ENCODE measurements at regions of chr17 and their contacts with region 1.

Region 1: DNA sequence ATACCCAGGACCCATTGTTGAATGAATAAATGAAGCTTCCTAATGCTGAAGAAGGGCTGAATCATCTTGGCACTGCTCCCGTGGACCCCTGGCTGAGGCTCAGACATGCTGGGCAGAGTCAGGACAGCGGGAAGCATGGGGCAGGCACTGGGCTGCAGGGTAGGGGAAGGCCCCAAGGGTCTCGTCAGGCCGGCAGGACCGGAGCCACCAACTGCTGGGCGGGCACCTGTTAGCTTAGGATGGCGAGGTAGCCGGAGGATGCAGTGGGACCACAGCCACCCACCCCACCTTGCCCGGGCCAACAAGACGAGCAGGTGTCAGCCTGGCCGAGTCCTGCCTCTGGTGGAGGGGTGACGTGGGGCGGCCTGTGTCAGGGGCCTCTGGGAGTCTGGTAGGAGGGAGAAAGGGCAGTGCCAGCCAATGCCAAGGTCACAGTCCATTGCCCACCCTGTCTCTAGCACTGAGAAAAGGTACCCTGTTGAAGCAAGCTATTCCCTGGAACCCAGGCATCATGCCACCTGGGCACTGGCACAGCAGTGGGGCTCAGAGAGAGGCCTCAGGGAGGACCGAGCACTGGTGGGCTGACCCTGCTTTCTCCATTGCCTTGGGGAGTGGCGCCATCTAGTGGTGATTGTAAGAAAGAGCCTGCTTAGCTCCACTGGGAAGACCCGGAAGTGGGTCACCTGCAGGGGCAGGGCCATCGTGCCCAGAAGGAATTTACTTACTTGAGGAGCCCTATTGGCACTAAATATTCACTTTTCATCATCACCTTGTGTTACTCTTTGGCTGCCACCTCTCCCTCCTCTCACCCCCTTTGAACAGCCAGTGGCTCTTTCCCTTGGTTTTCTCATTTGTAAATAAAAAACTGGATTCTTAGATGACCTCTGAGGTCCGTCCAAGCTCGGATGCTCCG is 3.0 kb upstream of the DLX3 start:
- DNase-seq: peak; percentile 68 to 94 (median 78)
- ATAC-seq: peak; percentile 83
- H3K4me3 ChIP-seq: no peak overlapping the region
- H3K4me3 Mint-ChIP-seq: no peak overlapping the region
- H3K27ac ChIP-seq: no peak overlapping the region
- H3K27ac Mint-ChIP-seq: no peak overlapping the region
- H3K4me1 ChIP-seq: peaks cover 44% of the 10 kb centered on the region
- H3K4me1 Mint-ChIP-seq: peaks cover 39% of the 10 kb centered on the region
- H3K27me3 ChIP-seq: peaks cover 71 to 82% of the 10 kb centered on the region in 2 experiments
- H3K27me3 Mint-ChIP-seq: peaks cover 84% of the 10 kb centered on the region
- CTCF ChIP-seq: peak; percentile 94

Region 2: GRCh38 chr17:49861150-49861892 is 136.7 kb before region 1 on chr17:
- CTCF ChIA-PET with region 1: interaction called, 18 read pairs
- POLR2A ChIA-PET with region 1: interaction called, 15 read pairs
- intact Hi-C with region 1: loop called (anchors 1 kb)
- DNase-seq: peak; percentile 28 to 83 (median 43)
- ATAC-seq: peak; percentile 80
- H3K4me3 ChIP-seq: no peak overlapping the region
- H3K4me3 Mint-ChIP-seq: no peak overlapping the region
- H3K27ac ChIP-seq: no peak overlapping the region
- H3K27ac Mint-ChIP-seq: no peak overlapping the region
- H3K4me1 ChIP-seq: peaks cover 6% of the 10 kb centered on the region
- H3K4me1 Mint-ChIP-seq: no peaks in the 10 kb centered on the region
- H3K27me3 ChIP-seq: peaks cover 0 to 10% of the 10 kb centered on the region in 2 experiments
- H3K27me3 Mint-ChIP-seq: peaks cover 6% of the 10 kb centered on the region
- CTCF ChIP-seq: peak; percentile 93

Region 3: DNA sequence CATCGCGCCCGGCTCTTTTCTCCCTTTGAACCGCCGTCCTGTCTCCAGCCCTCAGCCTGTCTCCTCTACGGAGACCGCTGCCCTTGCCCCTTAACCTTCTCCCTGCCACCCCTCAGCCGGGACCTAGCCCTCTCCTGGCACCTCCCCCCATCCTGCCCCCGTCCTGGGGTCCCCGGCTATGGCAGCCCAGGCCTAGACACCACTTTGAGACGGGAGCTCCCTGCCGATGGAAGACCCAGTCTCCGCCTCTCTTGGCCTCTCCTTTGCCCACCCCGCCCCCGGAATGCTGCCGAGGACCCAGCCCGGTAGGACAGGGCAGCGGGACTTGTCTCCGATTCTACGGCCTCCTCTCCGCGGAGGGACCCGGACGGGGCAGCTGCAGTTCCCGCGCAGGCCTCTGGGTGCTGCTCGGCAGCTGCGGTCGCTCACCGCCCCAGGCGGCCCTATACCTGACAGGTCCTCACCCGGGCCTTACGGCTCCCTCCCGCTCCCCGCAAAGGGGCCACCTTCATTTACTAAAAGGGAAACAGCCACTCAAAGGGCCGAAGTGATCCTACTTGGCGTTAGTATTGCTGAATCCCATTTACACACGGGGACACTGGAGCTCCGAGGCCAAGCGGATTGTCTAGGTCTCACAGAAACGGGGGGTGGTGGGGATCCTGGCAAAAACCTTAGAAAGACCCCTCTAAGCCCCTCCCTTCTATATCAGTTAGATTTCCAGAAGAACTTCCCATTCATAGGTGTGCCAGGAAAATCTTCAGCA is 117.6 kb before region 1 on chr17:
- CTCF ChIA-PET with region 1: interaction called, 37 read pairs
- POLR2A ChIA-PET with region 1: interaction called, 9 read pairs
- intact Hi-C with region 1: loop called (anchors 1 kb)
- DNase-seq: peak; percentile 36 to 82 (median 64)
- ATAC-seq: peak; percentile 99
- H3K4me3 ChIP-seq: peak overlapping the region; percentile 16
- H3K4me3 Mint-ChIP-seq: no peak overlapping the region
- H3K27ac ChIP-seq: no peak overlapping the region
- H3K27ac Mint-ChIP-seq: no peak overlapping the region
- H3K4me1 ChIP-seq: peaks cover 9% of the 10 kb centered on the region
- H3K4me1 Mint-ChIP-seq: peaks cover 6% of the 10 kb centered on the region
- H3K27me3 ChIP-seq: peaks cover 42 to 43% of the 10 kb centered on the region in 2 experiments
- H3K27me3 Mint-ChIP-seq: peaks cover 57% of the 10 kb centered on the region
- CTCF ChIP-seq: peak; percentile 97

Region 4: DNA sequence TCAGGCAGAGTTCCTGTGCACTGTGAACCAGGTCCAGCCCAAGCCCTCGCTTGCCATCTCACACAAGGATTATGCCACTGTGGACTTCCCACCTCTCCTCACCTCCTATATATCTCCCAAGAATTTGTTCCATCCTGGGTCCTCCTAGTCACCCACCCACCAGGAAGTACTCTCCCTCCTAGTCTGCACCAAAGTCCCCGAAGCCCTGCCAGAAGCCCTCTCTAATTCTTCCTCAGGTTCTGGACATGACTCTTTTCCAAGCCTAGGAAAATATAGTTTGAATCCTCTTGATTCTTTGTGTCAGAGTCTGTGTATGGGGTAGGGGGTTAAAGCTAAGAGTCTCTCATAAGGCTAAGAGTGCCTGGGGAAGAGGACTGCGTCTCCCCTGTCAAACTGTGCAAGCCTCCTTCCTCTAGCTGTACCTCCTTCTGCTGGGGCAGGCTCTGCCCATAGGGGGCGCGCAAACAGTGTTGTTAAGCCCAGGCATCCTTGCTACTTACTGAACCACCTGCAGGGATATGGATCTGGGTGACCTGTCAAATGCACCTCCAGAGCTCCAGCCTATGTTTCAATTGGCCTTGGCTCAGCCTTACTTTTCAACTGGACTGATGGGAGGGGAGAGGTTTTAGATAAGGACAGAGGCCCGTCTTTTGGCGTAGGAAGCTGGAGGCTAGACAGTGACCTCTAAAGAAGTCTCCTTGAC is 45.7 kb before region 1 on chr17:
- CTCF ChIA-PET with region 1: interaction called, 75 read pairs
- POLR2A ChIA-PET with region 1: interaction called, 8 read pairs
- intact Hi-C with region 1: loop called (anchors 1 kb)
- DNase-seq: peak; percentile 72 to 88 (median 80)
- ATAC-seq: peak; percentile 98
- H3K4me3 ChIP-seq: no peak overlapping the region
- H3K4me3 Mint-ChIP-seq: no peak overlapping the region
- H3K27ac ChIP-seq: no peak overlapping the region
- H3K27ac Mint-ChIP-seq: no peak overlapping the region
- H3K4me1 ChIP-seq: no peaks in the 10 kb centered on the region
- H3K4me1 Mint-ChIP-seq: no peaks in the 10 kb centered on the region
- H3K27me3 ChIP-seq: peaks cover 32 to 34% of the 10 kb centered on the region in 2 experiments
- H3K27me3 Mint-ChIP-seq: peaks cover 74% of the 10 kb centered on the region
- CTCF ChIP-seq: peak; percentile 89

Region 5: DNA sequence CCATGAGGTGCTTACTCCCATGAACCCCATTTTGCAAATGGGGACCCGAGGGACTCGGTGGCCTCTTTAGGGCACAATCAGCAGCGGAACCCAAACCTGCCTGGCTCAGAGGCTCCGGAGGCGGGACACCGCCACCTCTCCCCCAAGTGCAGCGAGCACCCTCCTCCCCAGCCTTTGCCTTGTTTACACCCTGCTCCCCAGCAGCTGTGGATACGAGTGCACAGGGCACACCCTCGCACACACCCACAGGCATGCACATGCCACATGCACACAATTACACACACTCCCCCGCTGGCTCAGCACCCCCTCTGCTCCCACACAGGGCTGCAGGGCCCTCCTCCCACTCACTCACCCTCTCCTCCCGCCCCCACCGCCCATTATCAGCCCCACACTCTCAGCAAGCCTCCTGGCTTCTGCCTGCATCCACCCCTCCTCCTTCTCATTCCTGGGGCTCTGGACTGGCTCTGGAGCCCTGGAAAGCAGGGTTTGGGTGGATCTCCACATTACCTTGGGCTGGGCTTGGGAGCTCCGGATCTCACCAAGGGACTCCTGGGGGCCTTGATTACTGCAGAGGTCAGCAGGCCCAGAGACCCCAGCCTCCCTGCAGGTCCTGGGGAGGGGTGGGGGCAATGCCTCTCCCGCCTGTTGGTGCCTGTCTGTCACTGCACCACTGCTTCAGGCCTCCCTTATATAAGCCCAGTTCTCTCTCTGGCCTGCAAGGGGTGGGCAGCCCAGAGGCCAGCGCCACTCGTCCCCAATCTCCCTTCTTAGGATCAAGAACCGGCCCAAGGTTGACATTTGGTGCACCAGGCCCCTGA is 103.5 kb after region 1 on chr17:
- CTCF ChIA-PET with region 1: no interaction called
- POLR2A ChIA-PET with region 1: no interaction called
- intact Hi-C with region 1: no loop called
- DNase-seq: no peak
- ATAC-seq: no peak
- H3K4me3 ChIP-seq: no peak overlapping the region
- H3K4me3 Mint-ChIP-seq: no peak overlapping the region
- H3K27ac ChIP-seq: no peak overlapping the region
- H3K27ac Mint-ChIP-seq: no peak overlapping the region
- H3K4me1 ChIP-seq: peaks cover 8% of the 10 kb centered on the region
- H3K4me1 Mint-ChIP-seq: peaks cover 13% of the 10 kb centered on the region
- H3K27me3 ChIP-seq: no peaks in the 10 kb centered on the region
- H3K27me3 Mint-ChIP-seq: no peaks in the 10 kb centered on the region
- CTCF ChIP-seq: no peak